Activated naive CD4-positive, alpha-beta T cell treated with anti-CD3 and anti-CD28 coated beads for 36 hours (primary cell): ENCODE measurements at regions of chr10 and their contacts with region 1.

Region 1: GRCh38 chr10:51699475-51700227 is at the start of gene CSTF2T:
- DNase-seq: peak; percentile 94
- H3K4me3 Mint-ChIP-seq: peak within 1 kb of the TSS; percentile 97
- H3K27ac Mint-ChIP-seq: peak within 1 kb of the TSS; percentile 100
- H3K4me1 Mint-ChIP-seq: peaks cover 45% of the 10 kb centered on the region
- H3K27me3 Mint-ChIP-seq: no peaks in the 10 kb centered on the region
- total RNA-seq, gene CSTF2T: 25.3 to 25.6 TPM

Region 2: GRCh38 chr10:51689536-51689935 is 10.1 kb before region 1 on chr10:
- CTCF ChIA-PET with region 1: no interaction called
- intact Hi-C with region 1: no loop called
- DNase-seq: no peak
- H3K4me3 Mint-ChIP-seq: no peak overlapping the region
- H3K27ac Mint-ChIP-seq: no peak overlapping the region
- H3K4me1 Mint-ChIP-seq: peaks cover 1% of the 10 kb centered on the region
- H3K27me3 Mint-ChIP-seq: no peaks in the 10 kb centered on the region

Region 3: DNA sequence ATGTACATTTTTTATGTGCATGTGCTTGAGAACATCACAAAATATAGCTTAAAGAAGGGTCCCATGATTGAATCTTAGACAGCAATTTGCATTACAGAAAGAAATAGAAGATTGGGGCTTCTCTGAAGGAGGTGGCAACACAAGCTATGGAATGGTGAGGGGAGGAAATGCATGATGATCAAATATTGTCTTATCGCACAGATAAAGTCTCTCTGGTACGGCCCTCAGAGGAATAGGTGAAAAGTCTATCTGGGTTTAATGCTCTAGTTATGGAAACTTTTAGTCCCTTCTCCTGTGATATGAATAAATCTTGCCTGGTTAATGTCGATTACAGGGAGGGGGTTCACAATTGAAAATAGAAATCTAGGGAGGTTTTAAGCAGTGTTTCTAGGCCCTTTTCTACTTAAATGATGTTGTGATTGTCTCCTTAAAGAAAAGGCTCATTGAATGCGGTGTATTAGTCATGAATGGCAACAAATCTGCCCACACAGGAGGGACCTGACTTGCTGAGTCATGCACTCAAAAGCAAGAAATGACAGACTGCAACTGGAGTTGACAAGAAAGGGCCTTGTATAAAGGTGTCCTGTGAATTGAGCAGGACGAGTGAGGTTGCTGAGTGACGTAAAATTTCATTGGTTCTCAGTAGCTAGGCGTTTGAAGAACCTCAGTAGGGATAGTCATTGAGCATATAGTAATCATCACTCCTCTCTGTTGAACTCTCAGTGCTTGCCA is 133.2 kb after region 1 on chr10:
- CTCF ChIA-PET with region 1: no interaction called
- intact Hi-C with region 1: loop called (anchors 5 kb)
- DNase-seq: peak; percentile 22
- H3K4me3 Mint-ChIP-seq: no peak overlapping the region
- H3K27ac Mint-ChIP-seq: no peak overlapping the region
- H3K4me1 Mint-ChIP-seq: peaks cover 4% of the 10 kb centered on the region
- H3K27me3 Mint-ChIP-seq: no peaks in the 10 kb centered on the region